GM12878 (cell line): ENCODE measurements at regions of chr12 and their contacts with region 1.

Region 1: GRCh38 chr12:92561543-92561899 is 141.3 kb upstream of the PLEKHG7 start:
- DNase-seq: no peak
- ATAC-seq: peak; percentile 13
- H3K4me3 ChIP-seq: peak overlapping the region; percentile 50; the same call in 1 of the 2 replicates
- H3K27ac ChIP-seq: peak overlapping the region; percentile 36
- H3K4me1 ChIP-seq: peaks cover 32% of the 10 kb centered on the region
- H3K27me3 ChIP-seq: no peaks in the 10 kb centered on the region
- CTCF ChIP-seq: no peak
- EP300 ChIP-seq: peak in 1 of 2 experiments; percentile 35; a peak in 1 of 4 replicates
- POLR2A ChIP-seq: no peak
- RAD21 ChIP-seq: no peak

Region 2: GRCh38 chr12:92402415-92402814 is 159.1 kb before region 1 on chr12:
- CTCF ChIA-PET with region 1: interaction called, 10 read pairs
- POLR2A ChIA-PET with region 1: interaction called, 4 read pairs
- RAD21 ChIA-PET with region 1: interaction called, 18 read pairs
- SMC1A ChIA-PET with region 1: interaction called, 31 read pairs
- in situ Hi-C with region 1: no loop called
- intact Hi-C with region 1: no loop called
- DNase-seq: no peak
- ATAC-seq: no peak
- H3K4me3 ChIP-seq: no peak overlapping the region
- H3K27ac ChIP-seq: peak overlapping the region; percentile 98
- H3K4me1 ChIP-seq: peaks cover 65% of the 10 kb centered on the region
- H3K27me3 ChIP-seq: no peaks in the 10 kb centered on the region
- CTCF ChIP-seq: no peak
- EP300 ChIP-seq: no peak
- POLR2A ChIP-seq: no peak
- RAD21 ChIP-seq: no peak

Region 3: GRCh38 chr12:92445253-92446082 is 116.1 kb before region 1 on chr12:
- CTCF ChIA-PET with region 1: interaction called, 4 read pairs
- POLR2A ChIA-PET with region 1: interaction called, 7 read pairs
- RAD21 ChIA-PET with region 1: interaction called, 13 read pairs
- SMC1A ChIA-PET with region 1: interaction called, 22 read pairs
- in situ Hi-C with region 1: loop called (anchors 25 kb)
- intact Hi-C with region 1: no loop called
- DNase-seq: peak; percentile 97
- ATAC-seq: peak; percentile 90
- H3K4me3 ChIP-seq: peak overlapping the region; percentile 41
- H3K27ac ChIP-seq: peak overlapping the region; percentile 100
- H3K4me1 ChIP-seq: peaks cover 44% of the 10 kb centered on the region
- H3K27me3 ChIP-seq: no peaks in the 10 kb centered on the region
- CTCF ChIP-seq: no peak
- EP300 ChIP-seq: peak; percentile 89 to 91
- POLR2A ChIP-seq: peak; percentile 61
- RAD21 ChIP-seq: peak; percentile 32; the same call in 1 of the 2 replicates

Region 4: GRCh38 chr12:92485351-92486348 is 75.9 kb before region 1 on chr12:
- CTCF ChIA-PET with region 1: interaction called, 4 read pairs
- POLR2A ChIA-PET with region 1: interaction called, 4 read pairs
- RAD21 ChIA-PET with region 1: interaction called, 61 read pairs
- SMC1A ChIA-PET with region 1: interaction called, 805 read pairs
- in situ Hi-C with region 1: no loop called
- intact Hi-C with region 1: no loop called
- DNase-seq: no peak
- ATAC-seq: peak; percentile 58
- H3K4me3 ChIP-seq: no peak overlapping the region
- H3K27ac ChIP-seq: peak overlapping the region; percentile 90
- H3K4me1 ChIP-seq: peaks cover 53% of the 10 kb centered on the region
- H3K27me3 ChIP-seq: no peaks in the 10 kb centered on the region
- CTCF ChIP-seq: no peak
- EP300 ChIP-seq: no peak
- POLR2A ChIP-seq: no peak
- RAD21 ChIP-seq: no peak

Region 5: GRCh38 chr12:92539113-92539749 is 22.3 kb before region 1 on chr12:
- CTCF ChIA-PET with region 1: interaction called, 5 read pairs
- POLR2A ChIA-PET with region 1: interaction called, 204 read pairs
- RAD21 ChIA-PET with region 1: interaction called, 269 read pairs
- SMC1A ChIA-PET with region 1: interaction called, 319 read pairs
- in situ Hi-C with region 1: no loop called
- intact Hi-C with region 1: loop called (anchors 1 kb)
- DNase-seq: peak; percentile 93
- ATAC-seq: peak; percentile 54
- H3K4me3 ChIP-seq: no peak overlapping the region
- H3K27ac ChIP-seq: peak overlapping the region; percentile 99
- H3K4me1 ChIP-seq: peaks cover 72% of the 10 kb centered on the region
- H3K27me3 ChIP-seq: no peaks in the 10 kb centered on the region
- CTCF ChIP-seq: no peak
- EP300 ChIP-seq: peak; percentile 90 to 98
- POLR2A ChIP-seq: no peak
- RAD21 ChIP-seq: 0 out of 2 replicates have a peak, but pooled peaks have one; percentile 36